Astrocyte of the cerebellum (primary cell): ENCODE measurements at regions of chr1 and their contacts with region 1.

Region 1: DNA sequence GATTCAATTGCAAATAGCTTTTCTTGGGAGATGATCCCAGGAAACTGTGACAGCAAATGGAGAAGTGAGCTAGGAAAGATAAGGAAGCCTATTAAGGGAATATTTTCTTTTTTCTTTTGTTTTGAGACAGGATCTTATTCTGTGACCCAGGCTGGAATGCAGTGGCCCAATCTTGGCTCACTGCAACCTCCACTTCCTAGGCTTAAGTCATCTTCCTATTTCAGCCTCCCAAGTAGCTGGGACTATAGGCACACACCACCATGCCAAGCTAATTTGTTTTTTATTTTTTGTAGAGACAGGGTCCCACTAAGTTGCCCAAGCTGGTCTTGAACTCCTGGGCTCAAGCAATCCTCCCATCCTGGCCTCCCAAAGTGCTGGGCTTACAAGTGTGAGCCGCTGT is 433.7 kb downstream of the RPS6KC1 start:
- DNase-seq: no peak
- H3K4me3 ChIP-seq: no peak overlapping the region
- CTCF ChIP-seq: no peak

Region 2: GRCh38 chr1:213541641-213542040 is 56.9 kb after region 1 on chr1:
- in situ Hi-C with region 1: loop called (anchors 5 kb)
- DNase-seq: no peak
- H3K4me3 ChIP-seq: no peak overlapping the region
- CTCF ChIP-seq: no peak